MCF 10A (cell line): ENCODE measurements at regions of chr10 and their contacts with region 1.

Region 1: GRCh38 chr10:117537436-117537903 is 5.1 kb upstream of the EMX2 start:
- DNase-seq: no peak
- H3K4me3 Mint-ChIP-seq: no peak overlapping the region
- H3K27ac Mint-ChIP-seq: no peak overlapping the region
- H3K4me1 Mint-ChIP-seq: no peaks in the 10 kb centered on the region
- H3K27me3 Mint-ChIP-seq: peaks cover 33% of the 10 kb centered on the region
- CTCF ChIP-seq: peak; percentile 80

Region 2: DNA sequence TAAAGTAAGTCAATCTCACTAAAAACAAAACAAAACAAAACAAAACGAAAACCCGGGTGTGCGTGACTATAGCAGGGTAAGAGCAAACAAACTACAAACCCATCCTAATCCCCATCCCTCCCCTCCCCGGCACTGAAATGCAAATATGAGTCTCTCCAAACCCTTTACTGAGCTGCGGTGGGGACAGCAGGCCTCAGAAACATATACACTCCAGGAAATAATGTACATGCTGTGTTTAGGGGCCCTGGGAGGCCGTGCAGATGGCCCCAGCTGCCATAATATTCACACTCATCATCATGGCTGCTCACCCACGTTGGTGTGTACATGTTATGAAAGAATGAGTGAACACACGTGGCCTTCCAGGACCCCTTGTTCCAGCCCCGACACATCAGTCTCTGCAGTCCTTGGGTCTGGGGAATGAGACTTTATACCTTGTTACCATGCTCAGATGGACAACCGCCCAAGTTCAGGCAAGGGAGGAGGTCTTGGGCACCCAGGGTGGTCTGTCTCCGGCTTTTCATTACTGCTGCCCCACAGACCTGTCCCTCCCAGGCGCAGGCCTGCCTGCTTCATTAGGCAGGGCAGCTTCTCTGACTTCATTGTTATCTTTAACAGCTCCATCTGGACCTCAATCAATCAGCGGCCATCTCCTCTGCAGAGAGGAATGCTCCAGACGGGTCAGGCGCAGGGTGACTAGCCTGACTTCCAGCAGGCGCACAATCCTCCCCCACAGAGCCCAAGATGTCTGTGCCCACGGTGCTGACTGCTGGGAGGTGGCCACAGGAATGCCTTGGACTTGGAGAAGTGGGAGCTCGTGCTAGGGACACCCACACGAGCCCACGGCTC is 815.7 kb before region 1 on chr10:
- CTCF ChIA-PET with region 1: no interaction called
- POLR2A ChIA-PET with region 1: no interaction called
- intact Hi-C with region 1: no loop called
- DNase-seq: no peak
- H3K4me3 Mint-ChIP-seq: no peak overlapping the region
- H3K27ac Mint-ChIP-seq: no peak overlapping the region
- H3K4me1 Mint-ChIP-seq: no peaks in the 10 kb centered on the region
- H3K27me3 Mint-ChIP-seq: no peaks in the 10 kb centered on the region
- CTCF ChIP-seq: no peak

Region 3: GRCh38 chr10:117552156-117552631 is 14.7 kb after region 1 on chr10:
- CTCF ChIA-PET with region 1: no interaction called
- POLR2A ChIA-PET with region 1: no interaction called
- intact Hi-C with region 1: no loop called
- DNase-seq: no peak
- H3K4me3 Mint-ChIP-seq: no peak overlapping the region
- H3K27ac Mint-ChIP-seq: no peak overlapping the region
- H3K4me1 Mint-ChIP-seq: no peaks in the 10 kb centered on the region
- H3K27me3 Mint-ChIP-seq: peaks cover 38% of the 10 kb centered on the region
- CTCF ChIP-seq: no peak

Region 4: GRCh38 chr10:117631276-117632145 is 94.0 kb after region 1 on chr10:
- CTCF ChIA-PET with region 1: no interaction called
- POLR2A ChIA-PET with region 1: no interaction called
- intact Hi-C with region 1: no loop called
- DNase-seq: no peak
- H3K4me3 Mint-ChIP-seq: no peak overlapping the region
- H3K27ac Mint-ChIP-seq: no peak overlapping the region
- H3K4me1 Mint-ChIP-seq: no peaks in the 10 kb centered on the region
- H3K27me3 Mint-ChIP-seq: no peaks in the 10 kb centered on the region
- CTCF ChIP-seq: no peak

Region 5: DNA sequence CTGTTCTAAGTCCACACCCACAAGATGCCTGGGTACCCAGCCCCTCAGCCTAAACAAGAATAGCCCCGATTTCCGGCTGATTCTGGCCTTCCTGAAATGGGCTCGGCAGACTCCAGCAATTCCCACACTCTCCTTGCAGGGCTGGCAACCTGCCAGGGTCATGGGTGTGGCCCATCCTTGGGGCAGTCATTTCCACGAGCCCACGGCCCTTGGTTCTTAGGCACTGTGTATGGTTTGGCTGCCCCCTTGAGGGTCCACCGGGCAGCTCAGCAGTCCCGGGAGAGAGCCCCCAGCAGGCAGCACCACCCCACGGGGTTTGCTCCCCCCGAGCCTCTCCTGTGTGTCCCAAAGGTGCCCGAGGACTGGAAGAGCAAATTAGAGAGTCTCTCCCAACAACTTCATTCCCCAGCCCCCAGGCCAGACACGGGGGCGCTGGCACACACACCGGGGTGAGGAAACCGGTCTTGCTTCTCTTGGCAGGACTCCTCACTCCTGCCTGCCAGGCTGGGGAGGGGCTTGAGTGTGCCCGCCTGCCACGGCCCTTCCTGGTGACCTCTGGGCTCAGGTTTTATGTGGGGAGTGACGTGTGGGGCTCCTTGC is 147.3 kb after region 1 on chr10:
- CTCF ChIA-PET with region 1: no interaction called
- POLR2A ChIA-PET with region 1: no interaction called
- intact Hi-C with region 1: loop called (anchors 10 kb)
- DNase-seq: peak; percentile 91
- H3K4me3 Mint-ChIP-seq: no peak overlapping the region
- H3K27ac Mint-ChIP-seq: no peak overlapping the region
- H3K4me1 Mint-ChIP-seq: peaks cover 9% of the 10 kb centered on the region
- H3K27me3 Mint-ChIP-seq: no peaks in the 10 kb centered on the region
- CTCF ChIP-seq: peak; percentile 40

Region 6: GRCh38 chr10:117752109-117752508 is 214.6 kb after region 1 on chr10:
- CTCF ChIA-PET with region 1: no interaction called
- POLR2A ChIA-PET with region 1: no interaction called
- intact Hi-C with region 1: loop called (anchors 5 kb)
- DNase-seq: no peak
- H3K4me3 Mint-ChIP-seq: no peak overlapping the region
- H3K27ac Mint-ChIP-seq: no peak overlapping the region
- H3K4me1 Mint-ChIP-seq: no peaks in the 10 kb centered on the region
- H3K27me3 Mint-ChIP-seq: no peaks in the 10 kb centered on the region
- CTCF ChIP-seq: no peak

Region 7: DNA sequence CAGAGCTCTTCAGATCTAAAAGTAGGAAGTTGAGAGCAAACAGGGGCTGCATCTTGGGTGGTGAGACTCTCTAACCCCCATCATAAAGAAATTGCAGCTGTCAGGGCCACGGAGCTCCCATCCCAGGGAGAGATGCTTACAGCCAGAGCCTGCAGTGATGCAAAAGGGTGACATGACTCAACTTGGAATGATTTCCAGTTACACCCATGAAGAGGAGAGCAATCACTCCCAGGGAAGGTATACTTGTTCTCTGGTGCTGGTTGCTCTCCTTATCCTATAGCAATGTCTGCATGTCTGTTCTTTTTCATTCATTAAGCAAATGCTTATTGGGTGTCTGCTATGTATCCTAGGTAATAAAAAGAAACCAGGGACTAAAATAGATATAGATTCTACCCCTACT is 281.3 kb after region 1 on chr10:
- CTCF ChIA-PET with region 1: no interaction called
- POLR2A ChIA-PET with region 1: no interaction called
- intact Hi-C with region 1: loop called (anchors 10 kb)
- DNase-seq: peak; percentile 47
- H3K4me3 Mint-ChIP-seq: no peak overlapping the region
- H3K27ac Mint-ChIP-seq: peak overlapping the region; percentile 13
- H3K4me1 Mint-ChIP-seq: peaks cover 15% of the 10 kb centered on the region
- H3K27me3 Mint-ChIP-seq: no peaks in the 10 kb centered on the region
- CTCF ChIP-seq: no peak

Region 8: DNA sequence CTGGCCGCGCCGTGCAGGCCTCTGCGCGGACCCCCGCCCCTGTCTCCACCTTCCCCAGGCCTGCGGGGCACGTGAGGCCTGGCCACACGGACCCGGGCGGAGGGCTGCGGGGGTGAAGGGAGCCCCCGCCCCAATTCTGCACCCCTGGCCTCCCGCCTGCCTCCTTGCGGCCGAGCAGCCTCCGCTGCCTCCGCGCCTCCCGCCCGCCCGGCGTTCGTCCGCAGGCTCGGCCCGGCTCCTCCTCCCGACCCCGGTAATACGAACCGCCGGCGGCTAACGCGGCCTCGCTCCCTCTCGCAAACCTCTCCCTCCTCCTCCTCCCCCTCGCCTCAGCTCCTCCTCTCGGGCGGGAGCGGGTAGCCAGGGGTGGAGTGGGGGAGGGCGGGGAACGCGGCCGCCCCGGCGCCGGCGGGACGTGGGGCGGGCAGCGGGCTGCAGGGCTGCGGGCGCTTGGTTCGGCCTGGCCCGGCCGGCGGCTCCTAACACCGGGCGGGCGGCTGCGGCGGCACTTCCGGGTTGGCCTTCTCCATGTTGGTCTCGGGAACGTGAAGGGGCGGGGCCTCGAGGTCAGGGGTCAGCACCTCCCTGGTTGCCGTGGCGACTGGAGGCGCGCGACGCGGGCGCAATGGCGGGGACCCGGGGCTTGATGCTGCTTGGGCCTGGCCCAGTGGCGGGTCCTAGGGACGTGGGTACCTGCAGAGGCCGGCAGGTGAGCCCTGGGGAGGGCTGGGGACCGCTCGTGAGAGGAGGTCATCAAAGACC is 509.1 kb after region 1 on chr10 and contains the start of gene RAB11FIP2:
- CTCF ChIA-PET with region 1: interaction called, 3 read pairs
- POLR2A ChIA-PET with region 1: no interaction called
- intact Hi-C with region 1: loop called (anchors 5 kb)
- DNase-seq: peak; percentile 91
- H3K4me3 Mint-ChIP-seq: peak within 1 kb of the TSS; percentile 82
- H3K27ac Mint-ChIP-seq: peak within 1 kb of the TSS; percentile 87
- H3K4me1 Mint-ChIP-seq: peaks cover 24% of the 10 kb centered on the region
- H3K27me3 Mint-ChIP-seq: no peaks in the 10 kb centered on the region
- CTCF ChIP-seq: no peak
- total RNA-seq, gene RAB11FIP2: 23.9 and 27.1 TPM in 2 replicates

Region 9: DNA sequence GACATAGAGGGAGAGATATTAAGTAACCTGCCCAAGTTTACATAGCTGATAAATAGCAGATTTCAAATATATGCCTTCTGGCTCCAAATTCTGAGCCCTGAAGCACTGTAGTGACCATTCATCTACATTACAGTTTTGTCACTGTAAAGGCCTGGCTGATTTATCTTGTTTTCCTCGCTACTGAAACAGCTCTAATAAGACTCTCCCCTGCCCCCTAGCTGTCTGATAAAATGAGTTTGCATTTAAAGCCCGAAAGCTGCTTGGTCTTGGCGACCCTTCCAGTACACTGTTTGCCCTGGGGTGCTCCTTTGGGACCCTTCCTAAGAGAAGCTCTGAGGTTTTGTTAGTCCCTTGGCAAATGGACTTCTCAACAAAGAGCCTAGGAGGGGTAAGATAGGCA is 569.0 kb after region 1 on chr10:
- CTCF ChIA-PET with region 1: interaction called, 12 read pairs
- POLR2A ChIA-PET with region 1: interaction called, 4 read pairs
- intact Hi-C with region 1: loop called (anchors 5 kb)
- DNase-seq: peak; percentile 49
- H3K4me3 Mint-ChIP-seq: no peak overlapping the region
- H3K27ac Mint-ChIP-seq: no peak overlapping the region
- H3K4me1 Mint-ChIP-seq: no peaks in the 10 kb centered on the region
- H3K27me3 Mint-ChIP-seq: no peaks in the 10 kb centered on the region
- CTCF ChIP-seq: no peak

Region 10: DNA sequence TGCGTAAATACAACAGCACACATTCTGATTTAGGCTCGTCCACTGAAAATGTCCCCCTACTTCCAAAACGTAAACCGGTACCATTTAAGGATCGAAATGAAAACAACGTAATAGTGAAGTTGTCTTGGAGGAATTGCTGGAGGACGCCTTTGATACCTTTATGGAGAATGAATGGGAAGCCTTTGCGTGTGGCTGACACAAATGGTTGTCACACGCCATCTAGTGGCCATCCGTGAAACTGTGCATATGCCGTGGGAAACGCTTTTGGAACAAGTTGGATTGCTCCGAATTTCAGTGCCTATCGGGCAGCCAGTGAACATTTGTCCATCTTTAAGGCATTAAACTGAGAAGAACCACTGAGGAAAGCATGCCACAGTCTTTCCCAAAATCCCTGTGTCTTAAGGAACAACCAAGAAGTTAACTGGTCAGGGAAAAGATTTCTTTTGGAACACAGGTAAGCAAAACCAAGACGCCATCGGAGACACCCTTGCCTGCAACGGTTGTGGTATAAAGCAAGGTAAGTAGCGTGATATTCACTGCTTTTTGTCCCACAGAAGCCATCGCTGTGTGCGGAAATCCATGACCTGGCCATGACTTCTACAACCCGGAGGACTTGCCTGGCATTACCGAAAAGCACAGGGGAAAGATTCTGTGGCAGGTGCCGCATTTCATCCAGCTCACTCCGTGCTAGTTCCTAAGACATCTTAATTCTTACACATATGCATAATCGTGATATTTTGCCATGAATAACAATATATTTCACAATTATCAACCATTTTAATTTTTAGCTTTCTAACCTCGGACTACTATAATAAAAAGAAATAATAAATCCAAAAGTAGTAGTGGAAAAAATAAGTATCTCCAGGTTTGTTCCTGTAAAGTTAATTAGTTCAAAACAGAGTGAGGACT is 704.0 kb after region 1 on chr10:
- CTCF ChIA-PET with region 1: interaction called, 87 read pairs
- POLR2A ChIA-PET with region 1: interaction called, 11 read pairs
- intact Hi-C with region 1: loop called (anchors 1 kb)
- DNase-seq: peak; percentile 86
- H3K4me3 Mint-ChIP-seq: peak overlapping the region; percentile 25
- H3K27ac Mint-ChIP-seq: no peak overlapping the region
- H3K4me1 Mint-ChIP-seq: no peaks in the 10 kb centered on the region
- H3K27me3 Mint-ChIP-seq: peaks cover 73% of the 10 kb centered on the region
- CTCF ChIP-seq: peak; percentile 96